Right cardiac atrium (tissue), 5 donors: ENCODE measurements at regions of chr2 and their contacts with region 1.

Region 1: DNA sequence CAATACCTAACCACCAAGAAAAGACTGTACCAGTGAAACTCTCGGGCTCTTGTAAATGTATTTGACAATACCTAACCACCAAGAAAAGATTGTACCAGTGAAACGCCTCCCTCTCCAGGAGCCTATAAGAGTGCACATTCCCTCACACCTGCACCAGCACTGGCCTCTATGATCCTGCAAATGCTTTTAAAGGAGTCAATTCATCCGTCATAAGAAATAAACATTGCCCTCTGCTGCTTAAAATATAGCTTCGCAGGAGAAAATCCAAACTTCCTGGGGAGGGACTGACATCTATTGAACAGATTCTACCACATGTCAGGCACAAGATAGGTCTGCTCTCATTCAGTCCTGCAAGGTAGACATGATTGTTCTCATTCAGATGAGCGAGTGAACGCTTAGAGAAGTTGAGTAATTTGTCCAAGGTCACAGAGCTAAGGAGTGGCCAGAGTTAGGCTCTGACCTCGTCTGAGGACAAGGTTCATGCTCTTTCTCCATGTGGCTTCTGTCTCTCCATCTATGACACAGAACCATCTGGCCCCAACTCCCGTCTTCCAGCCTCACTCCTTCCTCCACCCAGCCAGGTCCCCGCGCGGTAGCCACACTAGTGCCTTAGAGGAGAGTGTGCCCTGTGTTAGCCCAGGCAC is 38.7 kb downstream of the MCFD2 start:
- DNase-seq: peak in 2 of 3 donors; percentile 44 to 69
- ATAC-seq: peak; percentile 25 to 30
- H3K4me3 ChIP-seq: no peak overlapping the region
- H3K27ac ChIP-seq: peak overlapping the region; percentile 30
- H3K4me1 ChIP-seq: peaks cover 33% of the 10 kb centered on the region
- H3K27me3 ChIP-seq: no peaks in the 10 kb centered on the region

Region 2: DNA sequence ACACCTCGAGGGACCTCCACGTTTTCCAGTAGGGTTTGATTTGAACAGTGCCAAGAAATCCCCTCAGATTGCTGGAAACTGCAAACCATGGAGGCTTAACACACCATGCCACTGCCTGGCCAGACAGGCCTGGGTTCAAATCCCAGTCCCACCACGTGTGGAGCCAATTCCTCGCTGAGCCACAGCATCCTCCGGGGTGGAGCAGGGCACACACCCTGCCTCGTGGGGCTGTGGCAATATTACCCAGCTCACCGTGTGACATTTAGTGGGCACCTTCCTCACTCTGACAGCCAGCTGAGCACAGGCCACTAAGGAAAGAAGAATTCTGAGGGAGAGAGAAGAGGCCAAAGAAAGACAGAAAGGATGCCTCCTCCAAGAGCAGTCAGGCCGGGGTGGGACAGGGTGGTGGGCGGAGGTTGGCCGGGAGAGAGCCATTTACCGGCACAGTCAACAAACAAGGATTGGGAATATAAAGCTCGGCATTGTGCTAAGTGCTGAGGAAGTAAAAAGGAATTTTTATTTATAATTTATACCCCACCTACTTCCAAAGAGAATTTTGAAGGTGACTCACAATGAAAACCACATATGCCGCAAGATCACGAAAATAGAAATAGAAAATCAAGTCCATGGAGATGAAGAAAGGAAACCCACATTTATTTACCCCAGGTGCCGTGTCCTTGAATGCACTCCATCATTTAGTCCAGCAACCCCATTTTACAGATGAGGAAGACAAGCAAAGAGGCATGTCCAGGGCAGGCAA is 72.8 kb before region 1 on chr2:
- intact Hi-C with region 1: loop called in 1 of 4 experiments (anchors 10 kb)
- DNase-seq: peak in 1 of 3 donors; percentile 42
- ATAC-seq: peak in 1 of 2 donors; percentile 13
- H3K4me3 ChIP-seq: no peak overlapping the region
- H3K27ac ChIP-seq: no peak overlapping the region
- H3K4me1 ChIP-seq: peaks cover 10% of the 10 kb centered on the region
- H3K27me3 ChIP-seq: no peaks in the 10 kb centered on the region

Region 3: GRCh38 chr2:46812361-46813024 is 64.4 kb before region 1 on chr2:
- intact Hi-C with region 1: loop called in 3 of 4 experiments (anchors 5 to 10 kb)
- DNase-seq: peak; percentile 82 to 93 (median 91)
- ATAC-seq: peak; percentile 45 to 55
- H3K4me3 ChIP-seq: no peak overlapping the region
- H3K27ac ChIP-seq: peak overlapping the region; percentile 81
- H3K4me1 ChIP-seq: peaks cover 41% of the 10 kb centered on the region
- H3K27me3 ChIP-seq: no peaks in the 10 kb centered on the region